ENCODE measurements at regions of chr9 and their contacts with region 1.

Region 1: GRCh38 chr9:136991993-136992818 is at the start of gene PAXX:
- DNase-seq: peak; percentile 94
- ATAC-seq: peak; percentile 91
- H3K4me3 Mint-ChIP-seq: peak within 1 kb of the TSS; percentile 86
- H3K27ac Mint-ChIP-seq: peak within 1 kb of the TSS; percentile 84
- H3K4me1 Mint-ChIP-seq: peaks cover 33% of the 10 kb centered on the region
- H3K27me3 Mint-ChIP-seq: peaks cover 6% of the 10 kb centered on the region
- CTCF ChIP-seq: no peak
- total RNA-seq, gene PAXX: 43.4 and 47.8 TPM in 2 replicates

Region 2: DNA sequence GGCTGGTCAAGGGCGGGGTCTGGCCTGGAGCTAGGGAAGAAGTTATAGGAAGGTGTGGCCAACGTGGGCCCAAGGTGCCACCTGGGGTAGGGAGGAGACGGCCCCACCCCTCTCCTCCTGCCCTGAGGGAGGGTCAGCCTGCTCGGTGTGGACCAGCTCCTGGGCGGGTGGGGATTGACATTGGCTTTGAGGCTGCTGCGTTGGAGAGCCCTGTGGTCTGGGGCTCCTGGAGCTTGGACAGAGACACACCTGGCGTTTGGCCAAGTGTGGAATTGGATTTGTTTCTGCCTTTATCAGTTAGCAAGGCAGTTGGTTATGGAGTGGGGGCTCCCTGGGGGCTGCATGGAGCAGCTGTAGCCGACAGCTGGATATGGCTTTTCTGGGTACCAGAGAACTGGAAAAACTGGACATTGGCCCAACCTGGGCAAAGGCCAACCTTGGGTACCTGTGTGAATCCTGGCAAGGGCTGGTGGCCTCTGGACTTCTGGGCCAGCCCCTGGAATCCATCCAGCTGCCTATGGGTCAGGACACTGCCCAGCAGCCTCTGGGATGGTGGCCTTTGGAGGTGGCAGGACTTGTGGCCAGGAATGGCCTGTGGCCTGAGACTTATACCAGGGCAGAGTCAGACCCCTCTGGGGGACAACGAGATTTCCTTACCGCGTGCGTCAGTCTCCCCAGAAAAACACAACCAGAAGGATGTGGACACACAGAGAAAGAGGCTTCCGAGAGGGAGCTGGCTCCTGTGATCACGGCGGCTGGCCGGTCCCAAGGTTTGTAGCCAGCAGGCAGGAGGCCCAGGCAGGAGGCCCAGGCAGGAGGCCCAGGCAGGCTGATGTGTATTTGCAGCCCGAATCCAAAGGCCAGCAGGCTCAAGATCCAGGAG is 1588.2 kb before region 1 on chr9:
- CTCF ChIA-PET with region 1: no interaction called
- POLR2A ChIA-PET with region 1: no interaction called
- intact Hi-C with region 1: no loop called
- DNase-seq: no peak
- ATAC-seq: no peak
- H3K4me3 Mint-ChIP-seq: no peak overlapping the region
- H3K27ac Mint-ChIP-seq: no peak overlapping the region
- H3K4me1 Mint-ChIP-seq: no peaks in the 10 kb centered on the region
- H3K27me3 Mint-ChIP-seq: peaks cover 6% of the 10 kb centered on the region
- CTCF ChIP-seq: no peak

Region 3: GRCh38 chr9:135961277-135961705 is 1030.9 kb before region 1 on chr9 and contains the start of gene UBAC1:
- CTCF ChIA-PET with region 1: no interaction called
- POLR2A ChIA-PET with region 1: no interaction called
- intact Hi-C with region 1: loop called (anchors 5 kb)
- DNase-seq: peak; percentile 99
- ATAC-seq: peak; percentile 91
- H3K4me3 Mint-ChIP-seq: peak within 1 kb of the TSS; percentile 87
- H3K27ac Mint-ChIP-seq: peak within 1 kb of the TSS; percentile 76
- H3K4me1 Mint-ChIP-seq: peaks cover 29% of the 10 kb centered on the region
- H3K27me3 Mint-ChIP-seq: peaks cover 9% of the 10 kb centered on the region
- CTCF ChIP-seq: no peak
- total RNA-seq, gene UBAC1: 24.3 and 25.5 TPM in 2 replicates

Region 4: GRCh38 chr9:136849038-136849959 is 142.9 kb before region 1 on chr9 and contains the start of gene PHPT1:
- CTCF ChIA-PET with region 1: no interaction called
- POLR2A ChIA-PET with region 1: interaction called, 7 read pairs
- intact Hi-C with region 1: loop called (anchors 1 kb)
- DNase-seq: peak; percentile 94
- ATAC-seq: peak; percentile 94
- H3K4me3 Mint-ChIP-seq: peak within 1 kb of the TSS; percentile 95
- H3K27ac Mint-ChIP-seq: peak within 1 kb of the TSS; percentile 93
- H3K4me1 Mint-ChIP-seq: peaks cover 27% of the 10 kb centered on the region
- H3K27me3 Mint-ChIP-seq: peaks cover 6% of the 10 kb centered on the region
- CTCF ChIP-seq: no peak
- total RNA-seq, gene PHPT1: 58.8 and 64.6 TPM in 2 replicates

Region 5: GRCh38 chr9:136910197-136910900 is 81.9 kb before region 1 on chr9:
- CTCF ChIA-PET with region 1: no interaction called
- POLR2A ChIA-PET with region 1: no interaction called
- intact Hi-C with region 1: no loop called
- DNase-seq: no peak
- ATAC-seq: no peak
- H3K4me3 Mint-ChIP-seq: no peak overlapping the region
- H3K27ac Mint-ChIP-seq: no peak overlapping the region
- H3K4me1 Mint-ChIP-seq: peaks cover 20% of the 10 kb centered on the region
- H3K27me3 Mint-ChIP-seq: no peaks in the 10 kb centered on the region
- CTCF ChIP-seq: no peak

Region 6: GRCh38 chr9:136944519-136945279 is 47.5 kb before region 1 on chr9 and contains the starts of genes C8G and FBXW5:
- CTCF ChIA-PET with region 1: interaction called, 4 read pairs
- POLR2A ChIA-PET with region 1: interaction called, 15 read pairs
- intact Hi-C with region 1: loop called (anchors 1 kb)
- DNase-seq: peak; percentile 97
- ATAC-seq: peak; percentile 90
- H3K4me3 Mint-ChIP-seq: peak within 1 kb of the TSS; percentile 80
- H3K27ac Mint-ChIP-seq: peak within 1 kb of the TSS; percentile 79
- H3K4me1 Mint-ChIP-seq: peaks cover 9% of the 10 kb centered on the region
- H3K27me3 Mint-ChIP-seq: no peaks in the 10 kb centered on the region
- CTCF ChIP-seq: peak; percentile 48
- total RNA-seq, gene C8G: 0.69 and 3.4 TPM in 2 replicates
- total RNA-seq, gene FBXW5: 81.5 and 82.1 TPM in 2 replicates

Region 7: DNA sequence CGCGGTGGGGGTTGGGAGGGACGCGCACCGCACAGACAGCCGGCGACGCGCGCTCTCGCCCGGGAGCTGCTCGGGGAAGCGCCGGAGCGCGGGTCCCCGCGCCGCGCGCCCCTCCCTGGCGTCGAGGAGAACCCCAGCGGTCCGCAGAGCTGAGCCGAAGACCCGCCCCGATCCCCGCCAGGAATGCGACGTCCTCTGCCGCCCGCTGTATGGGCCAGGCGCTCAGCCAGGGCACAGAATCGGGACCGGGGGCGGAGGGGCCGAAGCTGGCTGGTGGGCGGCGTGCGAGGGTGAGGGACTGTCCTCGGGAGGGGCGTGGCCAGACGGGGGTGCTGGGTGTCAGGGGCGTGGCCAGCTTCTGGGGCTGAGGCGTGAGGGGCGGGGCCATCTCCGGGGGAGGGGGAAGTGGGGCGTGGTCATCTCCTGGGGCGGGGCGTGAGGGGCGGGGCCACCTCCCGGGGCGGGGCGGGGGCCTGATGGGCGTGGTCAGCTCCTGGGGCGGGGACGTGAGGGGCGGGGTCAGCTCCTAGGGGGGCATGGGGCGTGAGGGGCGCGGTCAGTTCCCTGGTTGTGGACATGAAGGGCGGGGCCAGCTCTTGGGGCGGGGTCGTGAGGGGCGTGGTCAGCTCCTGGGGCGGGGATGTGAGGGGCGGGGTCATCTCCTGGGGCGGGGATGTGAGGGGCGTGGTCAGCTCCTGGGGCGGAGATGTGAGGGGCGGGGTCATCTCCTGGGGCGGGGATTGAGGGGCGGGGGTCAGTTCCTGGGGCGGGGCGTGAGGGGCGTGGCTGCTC is 13.9 kb before region 1 on chr9:
- CTCF ChIA-PET with region 1: no interaction called
- POLR2A ChIA-PET with region 1: interaction called, 10 read pairs
- intact Hi-C with region 1: loop called (anchors 1 kb)
- DNase-seq: no peak
- ATAC-seq: peak; percentile 75
- H3K4me3 Mint-ChIP-seq: no peak overlapping the region
- H3K27ac Mint-ChIP-seq: no peak overlapping the region
- H3K4me1 Mint-ChIP-seq: no peaks in the 10 kb centered on the region
- H3K27me3 Mint-ChIP-seq: peaks cover 29% of the 10 kb centered on the region
- CTCF ChIP-seq: no peak

Region 8: DNA sequence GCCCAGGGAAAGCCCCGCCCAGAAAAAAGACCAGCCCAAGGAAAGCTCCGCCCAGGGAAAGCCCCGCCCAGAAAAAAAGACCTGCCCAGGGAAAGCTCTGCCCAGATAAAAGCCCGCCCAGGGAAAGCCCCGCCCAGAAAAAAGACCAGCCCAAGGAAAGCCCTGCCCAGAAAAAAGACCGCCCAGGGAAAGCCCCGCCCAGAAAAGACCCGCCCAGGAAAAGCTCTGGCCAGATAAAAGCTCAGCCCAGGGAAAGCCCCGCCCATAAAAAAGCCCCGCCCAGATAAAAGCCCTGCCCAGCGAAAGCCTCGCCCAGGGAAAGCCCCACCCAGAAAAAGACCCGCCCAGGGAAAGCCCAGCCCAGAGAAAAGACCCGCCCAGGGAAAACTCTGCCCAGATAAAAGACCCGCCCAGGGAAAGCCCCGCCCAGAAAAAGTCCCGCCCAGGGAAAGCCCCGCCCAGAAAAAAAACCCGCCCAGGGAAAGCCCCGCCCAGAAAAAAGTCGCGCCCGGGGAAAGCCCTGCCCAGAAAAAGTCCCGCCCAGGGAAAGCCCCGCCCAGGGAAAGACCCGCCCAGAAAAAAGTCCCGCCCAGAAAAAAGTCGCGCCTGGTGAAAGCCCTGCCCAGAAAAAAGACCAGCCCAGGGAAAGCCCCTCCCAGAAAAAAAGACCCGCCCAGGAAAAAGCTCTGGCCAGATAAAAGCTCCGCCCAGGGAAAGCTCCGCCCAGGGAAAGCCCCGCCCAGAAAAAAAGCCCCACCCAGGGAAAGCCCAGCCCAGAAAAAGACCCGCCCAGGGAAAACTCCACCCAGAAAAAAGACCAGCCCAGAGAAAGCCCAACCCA is 158.6 kb after region 1 on chr9:
- CTCF ChIA-PET with region 1: no interaction called
- POLR2A ChIA-PET with region 1: no interaction called
- intact Hi-C with region 1: loop called (anchors 2 kb)
- DNase-seq: peak; percentile 67
- ATAC-seq: peak; percentile 67
- H3K4me3 Mint-ChIP-seq: peak overlapping the region; percentile 52
- H3K27ac Mint-ChIP-seq: peak overlapping the region; percentile 92
- H3K4me1 Mint-ChIP-seq: peaks cover 14% of the 10 kb centered on the region
- H3K27me3 Mint-ChIP-seq: peaks cover 9% of the 10 kb centered on the region
- CTCF ChIP-seq: no peak

Measured in activated B cell treated with CpG ODN at 0.5 μM for 24 hours (primary cell).